ENCODE measurements at regions of chr17 and their contacts with region 1.

Region 1: DNA sequence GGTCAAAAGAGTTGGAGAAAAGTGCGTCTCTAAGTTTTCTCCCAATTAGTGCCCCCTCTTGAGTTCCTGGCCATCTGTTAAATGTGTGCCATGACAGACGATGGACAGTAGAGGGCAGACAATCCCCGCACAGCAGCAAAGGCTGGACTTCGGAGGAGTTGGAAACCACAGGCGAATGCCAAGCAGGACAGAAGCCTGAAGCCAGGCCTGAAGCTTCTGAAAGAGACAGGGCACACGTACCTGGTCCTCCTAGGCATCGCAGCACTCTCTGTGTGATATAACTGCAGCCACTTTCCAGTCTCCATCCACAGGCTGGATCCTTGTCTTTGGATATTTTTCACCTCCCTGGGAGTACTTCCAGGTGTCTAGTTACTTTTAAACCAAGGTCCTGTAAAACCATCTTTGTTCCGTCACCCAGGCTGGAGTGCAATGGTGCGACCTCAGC is 14.5 kb downstream of the C17orf100 start:
- DNase-seq: peak; percentile 86 to 90
- ATAC-seq: peak; percentile 87 to 94
- H3K4me3 ChIP-seq: no peak overlapping the region
- H3K27ac ChIP-seq: no peak overlapping the region
- H3K4me1 ChIP-seq: peaks cover 4% of the 10 kb centered on the region; the same call in 1 of the 3 replicates
- CTCF ChIP-seq: peak; percentile 97
- EP300 ChIP-seq: no peak
- POLR2A ChIP-seq: no peak
- RAD21 ChIP-seq: peak; percentile 97 to 99

Region 2: GRCh38 chr17:6054375-6054774 is 611.7 kb before region 1 on chr17:
- CTCF ChIA-PET with region 1: no interaction called
- POLR2A ChIA-PET with region 1: no interaction called
- DNase-seq: no peak
- ATAC-seq: no peak
- H3K4me3 ChIP-seq: no peak overlapping the region
- H3K27ac ChIP-seq: no peak overlapping the region
- H3K4me1 ChIP-seq: no peaks in the 10 kb centered on the region
- CTCF ChIP-seq: no peak
- EP300 ChIP-seq: no peak
- POLR2A ChIP-seq: no peak
- RAD21 ChIP-seq: no peak

Region 3: DNA sequence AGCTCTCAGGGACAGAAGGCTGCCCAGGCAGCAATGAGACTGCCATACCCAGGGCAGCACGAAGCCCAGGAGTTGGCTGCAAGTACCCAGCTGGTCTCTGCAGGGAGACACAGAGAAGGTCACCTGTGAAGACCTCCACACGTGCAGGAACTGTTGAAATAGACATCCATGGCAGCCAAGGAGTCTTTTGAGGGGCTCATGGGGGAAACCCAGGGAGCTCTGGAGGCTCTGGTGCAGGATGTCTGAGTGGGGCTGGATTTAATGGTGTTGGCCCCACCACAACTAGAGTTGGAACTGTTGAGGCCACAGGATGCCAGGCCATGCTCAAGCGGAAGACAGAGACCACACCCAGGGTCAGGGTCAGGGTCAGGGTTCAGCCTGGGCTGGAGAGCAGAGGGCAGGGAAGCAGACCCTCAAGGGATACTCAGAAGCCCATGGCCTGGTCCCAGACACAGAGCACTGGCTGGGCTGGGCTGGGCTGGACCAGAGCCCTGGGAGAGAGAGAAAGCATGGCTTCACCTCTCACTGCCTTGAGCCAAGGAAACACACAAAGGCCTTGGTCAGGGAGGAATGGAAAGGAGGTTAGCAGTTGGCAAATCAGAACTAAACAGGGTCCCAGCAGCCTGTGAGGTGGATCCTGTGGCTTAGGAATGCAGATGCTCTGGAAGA is 131.1 kb before region 1 on chr17:
- CTCF ChIA-PET with region 1: no interaction called
- POLR2A ChIA-PET with region 1: no interaction called
- DNase-seq: no peak
- ATAC-seq: peak in 1 of 2 experiments; percentile 33; a peak in 1 of 6 replicates
- H3K4me3 ChIP-seq: no peak overlapping the region
- H3K27ac ChIP-seq: no peak overlapping the region
- H3K4me1 ChIP-seq: no peaks in the 10 kb centered on the region
- CTCF ChIP-seq: no peak
- EP300 ChIP-seq: no peak
- POLR2A ChIP-seq: no peak
- RAD21 ChIP-seq: no peak

Region 4: DNA sequence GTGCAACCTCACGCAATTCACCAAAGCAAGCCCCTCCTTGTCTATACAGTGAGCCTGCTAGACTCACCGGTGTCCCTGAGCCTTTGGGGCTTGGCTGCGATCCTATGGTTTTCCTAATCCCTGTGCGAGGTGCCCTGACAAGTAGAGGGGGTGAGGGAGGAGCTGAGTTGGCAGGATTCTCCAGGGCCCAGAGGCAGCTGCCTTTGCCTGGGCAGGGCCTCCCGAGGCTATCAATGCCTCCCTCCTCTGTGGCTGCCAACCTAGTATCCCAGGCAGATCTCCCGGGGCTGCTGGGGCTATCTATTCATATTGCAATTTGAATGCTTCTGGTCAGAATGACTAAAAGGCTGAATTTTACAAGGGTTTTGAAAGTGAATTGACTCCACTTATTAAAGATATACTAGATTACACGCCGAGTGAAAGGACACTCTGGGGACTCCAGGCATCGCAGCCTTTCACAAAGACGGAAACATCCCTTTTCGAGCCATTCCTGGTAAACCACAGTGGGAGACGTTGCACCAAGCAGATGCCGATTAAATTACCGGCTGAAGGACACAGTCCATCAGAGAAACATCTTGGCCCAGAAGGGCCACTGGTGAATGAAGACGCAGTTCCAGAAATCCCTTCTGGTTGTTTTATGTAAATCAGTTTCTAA is 98.4 kb before region 1 on chr17:
- CTCF ChIA-PET with region 1: no interaction called
- POLR2A ChIA-PET with region 1: no interaction called
- DNase-seq: no peak
- ATAC-seq: peak; percentile 35 to 46; a peak in 4 of 6 replicates
- H3K4me3 ChIP-seq: no peak overlapping the region
- H3K27ac ChIP-seq: peak overlapping the region in 1 of 2 experiments; percentile 25; a peak in 2 of 6 replicates
- H3K4me1 ChIP-seq: 0 out of 3 replicates have a peak, but pooled peaks cover 8% of the 10 kb centered on the region
- CTCF ChIP-seq: no peak
- EP300 ChIP-seq: no peak
- POLR2A ChIP-seq: no peak
- RAD21 ChIP-seq: no peak

Region 5: DNA sequence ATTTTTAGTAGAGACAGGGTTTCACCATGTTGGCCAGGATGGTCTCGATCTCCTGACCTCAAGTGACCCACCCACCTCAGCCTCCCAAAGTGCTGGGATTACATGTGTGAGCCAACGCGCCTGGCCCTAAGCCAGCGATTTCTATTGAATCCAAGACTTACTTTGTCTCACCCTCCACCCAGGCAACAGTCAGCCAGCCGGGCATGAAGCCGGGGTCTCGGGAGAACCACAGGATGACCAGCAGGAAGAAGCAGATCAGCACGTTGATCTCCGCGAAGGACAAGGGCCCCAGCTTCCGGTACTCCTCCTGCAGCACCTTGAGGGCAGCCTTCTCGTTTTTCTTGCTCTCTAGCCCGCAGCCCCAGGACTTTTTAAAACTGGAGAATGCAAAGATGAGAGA is 29.5 kb after region 1 on chr17:
- CTCF ChIA-PET with region 1: interaction called, 56 read pairs
- POLR2A ChIA-PET with region 1: no interaction called
- DNase-seq: no peak
- ATAC-seq: no peak
- H3K4me3 ChIP-seq: no peak overlapping the region
- H3K27ac ChIP-seq: no peak overlapping the region
- H3K4me1 ChIP-seq: no peaks in the 10 kb centered on the region
- CTCF ChIP-seq: no peak
- EP300 ChIP-seq: no peak
- POLR2A ChIP-seq: no peak
- RAD21 ChIP-seq: no peak

Region 6: GRCh38 chr17:6713130-6713917 is 47.2 kb after region 1 on chr17 and contains the start of gene SLC13A5:
- CTCF ChIA-PET with region 1: interaction called, 24 read pairs
- POLR2A ChIA-PET with region 1: no interaction called
- DNase-seq: peak; percentile 80 to 85
- ATAC-seq: peak; percentile 91 to 98
- H3K4me3 ChIP-seq: peak within 1 kb of the TSS; percentile 58
- H3K27ac ChIP-seq: peak within 1 kb of the TSS; percentile 54 to 74
- H3K4me1 ChIP-seq: 0 out of 3 replicates have a peak, but pooled peaks cover 3% of the 10 kb centered on the region
- CTCF ChIP-seq: peak; percentile 60
- EP300 ChIP-seq: no peak
- POLR2A ChIP-seq: no peak
- RAD21 ChIP-seq: peak in 1 of 2 experiments; percentile 37; a peak in 3 of 5 replicates
- polyA plus RNA-seq, gene SLC13A5: 0.26 and 0.30 TPM in 2 replicates

Region 7: GRCh38 chr17:6831661-6832263 is 165.7 kb after region 1 on chr17 and contains the start of gene TEKT1:
- CTCF ChIA-PET with region 1: interaction called, 11 read pairs
- POLR2A ChIA-PET with region 1: no interaction called
- DNase-seq: peak; percentile 81 to 86
- ATAC-seq: peak; percentile 93 to 95
- H3K4me3 ChIP-seq: peak within 1 kb of the TSS; percentile 47
- H3K27ac ChIP-seq: peak within 1 kb of the TSS in 1 of 2 experiments; percentile 50; a peak in 2 of 6 replicates
- H3K4me1 ChIP-seq: peaks cover 11% of the 10 kb centered on the region; the same call in 2 of the 3 replicates
- CTCF ChIP-seq: no peak
- EP300 ChIP-seq: no peak
- POLR2A ChIP-seq: no peak
- RAD21 ChIP-seq: no peak
- polyA plus RNA-seq, gene TEKT1: not detected in 2 replicates

Region 8: GRCh38 chr17:6913608-6914443 is 247.7 kb after region 1 on chr17:
- CTCF ChIA-PET with region 1: interaction called, 23 read pairs
- POLR2A ChIA-PET with region 1: no interaction called
- DNase-seq: peak; percentile 57 to 74
- ATAC-seq: peak; percentile 70 to 82
- H3K4me3 ChIP-seq: peak overlapping the region; percentile 36; the same call in 2 of the 3 replicates
- H3K27ac ChIP-seq: peak overlapping the region; percentile 9 to 50; a peak in 3 of 6 replicates
- H3K4me1 ChIP-seq: peaks cover 5% of the 10 kb centered on the region; the same call in 2 of the 3 replicates
- CTCF ChIP-seq: peak; percentile 84
- EP300 ChIP-seq: no peak
- POLR2A ChIP-seq: no peak
- RAD21 ChIP-seq: peak; percentile 88 to 89

Region 9: DNA sequence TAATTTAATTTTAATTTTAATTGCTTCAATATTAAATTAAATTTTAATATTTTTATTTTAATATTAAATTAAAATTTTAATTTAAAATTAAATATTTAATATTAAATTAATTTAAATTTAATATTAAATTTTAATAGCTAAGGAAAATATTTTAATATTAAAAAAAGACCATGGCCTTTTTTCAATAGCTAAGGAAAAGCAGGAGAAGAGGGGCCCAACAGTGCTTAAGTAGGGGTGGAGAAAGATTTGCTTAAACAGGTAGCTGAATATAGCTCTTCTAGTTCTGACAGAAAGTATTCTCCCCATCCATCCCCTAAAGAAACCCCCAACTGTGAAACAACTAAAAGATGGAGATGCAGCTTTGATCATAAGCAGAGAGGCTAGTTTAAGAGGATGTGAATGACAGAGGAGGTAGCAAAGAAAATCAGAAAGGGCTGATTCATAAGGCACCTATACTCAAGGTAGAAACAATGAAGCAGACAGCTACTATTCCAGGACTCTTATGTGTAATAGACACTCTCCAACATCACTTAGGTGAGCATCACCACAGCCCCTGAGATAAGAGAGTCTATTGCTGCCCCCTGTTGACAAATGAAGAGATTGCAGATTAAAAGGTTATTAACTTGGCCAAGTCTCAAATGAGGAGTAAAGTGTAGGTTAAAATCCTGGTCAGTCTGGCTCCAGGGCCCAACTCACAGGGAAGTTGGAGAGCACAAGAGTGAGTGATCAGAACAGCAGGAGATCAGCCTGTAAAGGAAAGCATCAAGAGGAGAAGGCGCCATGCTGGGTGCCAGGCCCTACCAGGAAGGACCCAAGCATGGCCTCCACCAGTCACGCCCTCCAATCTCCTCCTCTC is 338.5 kb after region 1 on chr17:
- CTCF ChIA-PET with region 1: interaction called, 293 read pairs
- POLR2A ChIA-PET with region 1: no interaction called
- DNase-seq: peak; percentile 84 to 85
- ATAC-seq: peak; percentile 91
- H3K4me3 ChIP-seq: no peak overlapping the region
- H3K27ac ChIP-seq: no peak overlapping the region
- H3K4me1 ChIP-seq: no peaks in the 10 kb centered on the region
- CTCF ChIP-seq: peak; percentile 96
- EP300 ChIP-seq: no peak
- POLR2A ChIP-seq: no peak
- RAD21 ChIP-seq: peak; percentile 96 to 97

Region 10: GRCh38 chr17:7021993-7022778 is 356.1 kb after region 1 on chr17:
- CTCF ChIA-PET with region 1: interaction called, 48 read pairs
- POLR2A ChIA-PET with region 1: no interaction called
- DNase-seq: peak; percentile 78 to 95
- ATAC-seq: peak; percentile 60 to 83
- H3K4me3 ChIP-seq: no peak overlapping the region
- H3K27ac ChIP-seq: peak overlapping the region; percentile 42 to 71; a peak in 5 of 6 replicates
- H3K4me1 ChIP-seq: peaks cover 24% of the 10 kb centered on the region
- CTCF ChIP-seq: peak; percentile 91
- EP300 ChIP-seq: no peak
- POLR2A ChIP-seq: no peak
- RAD21 ChIP-seq: peak; percentile 82 to 88

Measured in A549 (cell line).